Activated naive CD4-positive, alpha-beta T cell treated with anti-CD3 and anti-CD28 coated beads for 36 hours (primary cell): ENCODE measurements at regions of chr10 and their contacts with region 1.

Region 1: DNA sequence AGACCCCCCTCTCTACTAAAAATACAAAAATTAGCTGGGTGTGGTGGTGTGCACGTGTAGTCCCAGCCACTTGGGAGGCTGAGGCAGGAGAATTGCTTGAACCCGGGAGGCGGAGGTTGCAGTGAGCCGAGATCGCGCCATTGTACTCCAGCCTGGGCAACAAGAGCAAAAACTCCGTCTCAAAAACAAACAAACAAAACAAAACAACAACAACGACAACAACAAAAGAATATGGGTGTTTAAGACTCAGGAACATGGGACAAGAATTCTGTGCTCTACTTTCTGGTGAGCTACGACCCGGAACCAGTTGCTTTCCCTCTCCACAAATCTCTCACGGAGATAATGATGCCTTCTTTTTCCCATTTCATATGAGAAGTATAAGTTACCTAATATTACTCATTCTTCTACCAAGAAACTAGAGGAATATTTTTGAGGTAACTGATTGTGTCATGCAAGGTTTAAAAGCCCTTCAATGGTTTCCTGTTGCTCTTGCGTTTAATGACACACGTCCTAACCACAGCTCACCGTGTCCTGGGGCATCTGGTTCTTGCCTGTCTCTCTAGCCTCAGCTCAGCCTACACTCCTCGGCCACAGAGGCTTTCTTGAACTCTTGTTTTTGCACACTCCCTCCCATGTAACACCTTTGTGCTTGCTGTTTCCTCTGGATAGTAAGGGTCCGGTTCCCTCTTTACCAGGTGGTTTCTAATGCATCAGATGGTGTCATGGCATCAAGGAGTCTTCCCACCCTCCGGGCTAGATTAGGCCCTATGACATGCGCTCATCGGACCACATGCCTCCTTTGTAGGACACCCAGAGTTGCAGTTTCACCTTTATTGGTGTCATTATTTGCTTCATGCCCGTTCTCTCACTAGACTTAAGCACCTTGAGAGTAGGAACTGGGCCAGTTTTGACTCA is 67.5 kb downstream of the PFKFB3 start:
- DNase-seq: peak; percentile 90
- H3K4me3 Mint-ChIP-seq: peak overlapping the region; percentile 13
- H3K27ac Mint-ChIP-seq: peak overlapping the region; percentile 93
- H3K4me1 Mint-ChIP-seq: peaks cover 50% of the 10 kb centered on the region
- H3K27me3 Mint-ChIP-seq: no peaks in the 10 kb centered on the region

Region 2: DNA sequence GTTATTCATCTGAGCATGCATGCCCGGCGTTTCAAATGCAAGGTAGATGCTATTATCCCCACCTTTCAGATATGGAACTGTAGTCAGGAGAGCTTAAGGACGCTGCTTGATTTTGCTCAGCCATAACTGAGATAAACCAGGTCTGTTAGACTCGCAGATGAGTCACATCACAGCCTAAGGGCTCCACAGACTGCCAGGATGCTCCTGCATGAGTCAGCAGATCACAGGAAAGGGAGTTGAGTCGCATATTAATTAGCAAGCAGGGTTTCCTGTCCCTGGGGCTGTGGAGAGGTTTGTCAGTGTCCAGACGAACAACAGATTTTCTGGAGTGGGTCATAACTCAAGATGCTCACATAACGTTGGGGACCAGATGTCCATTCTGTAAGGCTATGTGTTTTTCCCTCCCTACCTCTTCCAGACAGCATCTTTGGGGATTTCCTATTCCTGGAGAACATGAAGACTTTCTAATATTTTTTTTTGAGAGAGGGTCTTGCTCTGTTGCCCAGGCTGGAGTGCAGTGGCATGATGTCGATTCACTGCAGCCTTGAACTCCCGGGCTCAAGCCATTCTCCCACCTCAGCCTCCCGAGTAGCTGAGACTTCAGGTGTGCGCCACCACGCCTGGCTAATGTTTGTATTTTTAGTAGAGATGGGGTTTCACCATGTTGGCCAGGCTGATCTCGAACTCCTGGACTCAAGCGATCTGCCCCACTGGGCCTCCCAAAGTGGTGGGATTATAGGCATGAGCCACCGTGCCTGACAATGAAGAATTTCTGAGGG is 30.8 kb before region 1 on chr10:
- CTCF ChIA-PET with region 1: no interaction called
- intact Hi-C with region 1: loop called (anchors 1 kb)
- DNase-seq: peak; percentile 90
- H3K4me3 Mint-ChIP-seq: no peak overlapping the region
- H3K27ac Mint-ChIP-seq: peak overlapping the region; percentile 60
- H3K4me1 Mint-ChIP-seq: peaks cover 23% of the 10 kb centered on the region
- H3K27me3 Mint-ChIP-seq: no peaks in the 10 kb centered on the region

Region 3: GRCh38 chr10:6300106-6300783 is 30.0 kb after region 1 on chr10:
- CTCF ChIA-PET with region 1: interaction called, 4 read pairs
- intact Hi-C with region 1: loop called (anchors 1 kb)
- DNase-seq: peak; percentile 79
- H3K4me3 Mint-ChIP-seq: peak overlapping the region; percentile 35
- H3K27ac Mint-ChIP-seq: peak overlapping the region; percentile 91
- H3K4me1 Mint-ChIP-seq: peaks cover 51% of the 10 kb centered on the region
- H3K27me3 Mint-ChIP-seq: no peaks in the 10 kb centered on the region

Region 4: DNA sequence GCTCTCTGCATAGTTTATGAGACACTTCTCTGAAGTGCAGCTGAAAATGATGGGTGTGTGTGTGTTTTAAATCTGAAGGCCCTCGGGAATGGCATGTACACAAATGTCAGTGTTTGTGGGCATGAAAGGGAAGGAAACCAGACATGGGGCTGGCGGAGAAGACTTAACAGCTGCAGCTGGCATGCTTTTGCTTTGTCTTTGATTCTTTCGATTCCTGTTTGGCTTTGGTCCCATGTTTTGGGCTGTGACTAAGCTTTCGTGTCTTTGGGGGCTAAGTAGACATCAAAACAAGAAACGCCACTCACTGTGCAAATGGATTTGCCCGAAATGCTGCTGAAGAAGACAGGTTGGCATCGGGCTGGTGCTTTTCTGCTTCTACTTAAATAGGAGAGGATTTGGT is 111.9 kb after region 1 on chr10:
- CTCF ChIA-PET with region 1: no interaction called
- intact Hi-C with region 1: loop called (anchors 1 kb)
- DNase-seq: peak; percentile 80
- H3K4me3 Mint-ChIP-seq: peak overlapping the region; percentile 38
- H3K27ac Mint-ChIP-seq: peak overlapping the region; percentile 70
- H3K4me1 Mint-ChIP-seq: peaks cover 27% of the 10 kb centered on the region
- H3K27me3 Mint-ChIP-seq: no peaks in the 10 kb centered on the region

Region 5: DNA sequence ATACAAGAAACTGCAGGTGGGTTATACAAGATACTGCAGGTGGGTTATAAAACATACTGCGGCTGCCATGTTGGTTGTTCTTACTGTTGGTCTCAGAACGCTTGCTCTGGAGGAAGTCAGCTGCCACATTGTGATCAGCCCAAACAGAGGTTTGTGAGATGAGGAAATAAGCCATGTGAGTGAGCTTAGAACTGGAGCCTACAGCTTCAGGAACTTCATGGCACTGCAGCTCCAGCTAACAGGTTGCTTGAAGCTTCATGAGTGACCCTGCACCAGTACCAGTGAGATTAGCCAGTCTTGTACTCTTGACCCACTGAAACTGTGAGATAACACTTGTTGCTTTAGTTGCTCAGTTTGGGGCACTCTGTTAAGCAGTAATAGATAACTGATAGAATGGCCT is 384.4 kb after region 1 on chr10:
- CTCF ChIA-PET with region 1: no interaction called
- intact Hi-C with region 1: no loop called
- DNase-seq: no peak
- H3K4me3 Mint-ChIP-seq: no peak overlapping the region
- H3K27ac Mint-ChIP-seq: no peak overlapping the region
- H3K4me1 Mint-ChIP-seq: peaks cover 20% of the 10 kb centered on the region
- H3K27me3 Mint-ChIP-seq: no peaks in the 10 kb centered on the region